ENCODE measurements at regions of chr12 and their contacts with region 1.

Region 1: GRCh38 chr12:132771126-132771838 is 9.7 kb upstream of the ANKLE2 start:
- DNase-seq: peak; percentile 92
- H3K4me3 ChIP-seq: peak overlapping the region; percentile 63
- H3K27ac ChIP-seq: peak overlapping the region; percentile 99
- H3K4me1 ChIP-seq: peaks cover 65% of the 10 kb centered on the region
- CTCF ChIP-seq: no peak

Region 2: DNA sequence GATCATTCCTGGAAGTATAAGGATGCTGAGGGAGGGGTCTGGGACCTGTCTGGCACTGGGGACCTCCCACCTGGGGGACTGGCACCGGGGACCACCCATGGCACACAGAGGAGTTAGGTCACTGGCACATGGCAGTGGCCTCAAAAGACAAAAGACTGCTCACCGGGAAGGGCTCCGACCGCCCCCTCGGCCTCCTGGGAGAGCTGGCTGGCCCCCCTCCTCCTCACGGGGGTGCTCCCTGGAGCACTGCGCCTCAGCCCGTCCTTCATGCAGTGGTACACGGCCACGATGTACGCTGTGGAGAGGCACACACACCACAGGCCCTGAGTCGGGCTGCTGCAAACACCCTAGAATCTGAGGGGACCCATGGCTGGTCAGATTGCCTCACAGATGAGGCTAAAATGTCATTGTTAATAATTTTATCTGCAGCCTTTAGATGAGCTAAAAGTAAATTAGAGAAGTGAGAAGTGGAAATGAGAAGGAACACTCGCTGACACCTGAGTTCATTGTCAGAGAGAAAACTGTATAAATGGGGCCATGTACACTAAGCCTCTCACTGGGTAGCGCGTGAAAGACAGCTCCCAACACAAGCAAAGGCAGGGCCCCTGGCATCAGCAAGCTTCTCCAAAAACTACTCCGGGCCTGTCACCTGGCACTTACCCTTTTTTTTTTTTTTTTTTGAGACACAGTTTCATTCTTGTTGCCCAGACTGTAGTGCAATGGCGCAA is 138.6 kb before region 1 on chr12:
- CTCF ChIA-PET with region 1: no interaction called
- POLR2A ChIA-PET with region 1: no interaction called
- intact Hi-C with region 1: loop called (anchors 2 kb)
- DNase-seq: peak; percentile 89
- H3K4me3 ChIP-seq: peak overlapping the region; percentile 20
- H3K27ac ChIP-seq: peak overlapping the region; percentile 100
- H3K4me1 ChIP-seq: peaks cover 62% of the 10 kb centered on the region
- CTCF ChIP-seq: no peak

Region 3: DNA sequence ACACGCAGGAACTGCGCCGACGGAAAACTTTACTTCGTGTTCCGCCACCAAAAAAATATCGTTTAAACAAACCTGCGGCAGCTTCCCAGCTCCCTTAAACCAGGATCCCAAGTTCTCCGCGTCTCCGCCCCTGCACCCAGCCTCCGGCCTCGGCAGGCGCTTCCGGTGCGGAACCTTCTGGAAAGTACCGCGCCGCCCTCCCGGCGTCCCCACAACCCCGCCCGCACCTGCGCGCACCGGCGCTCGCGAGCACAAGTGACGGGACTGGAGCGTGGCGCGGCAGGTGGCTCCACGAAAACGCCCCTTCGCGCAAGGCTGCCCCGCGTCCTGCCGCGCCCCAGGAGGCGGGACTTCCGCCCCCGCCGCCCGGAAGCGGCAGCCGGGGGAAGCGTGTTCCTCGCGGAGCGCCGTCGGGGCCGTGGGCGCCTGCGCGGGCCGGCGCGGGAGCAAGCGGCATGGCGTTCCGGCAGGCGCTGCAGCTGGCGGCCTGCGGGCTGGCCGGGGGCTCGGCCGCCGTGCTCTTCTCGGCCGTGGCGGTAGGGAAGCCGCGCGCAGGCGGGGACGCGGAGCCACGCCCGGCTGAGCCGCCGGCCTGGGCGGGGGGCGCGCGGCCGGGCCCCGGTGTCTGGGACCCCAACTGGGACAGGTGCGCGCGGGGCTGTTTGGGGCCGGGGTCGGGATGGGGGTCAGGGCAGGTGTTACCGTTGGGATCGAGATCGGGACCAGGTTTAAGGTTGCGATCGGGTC is 60.7 kb before region 1 on chr12 and contains the start of gene PGAM5:
- CTCF ChIA-PET with region 1: no interaction called
- POLR2A ChIA-PET with region 1: no interaction called
- intact Hi-C with region 1: loop called (anchors 2 kb)
- DNase-seq: peak; percentile 94
- H3K4me3 ChIP-seq: peak within 1 kb of the TSS; percentile 100
- H3K27ac ChIP-seq: peak within 1 kb of the TSS; percentile 73
- H3K4me1 ChIP-seq: peaks cover 11% of the 10 kb centered on the region
- CTCF ChIP-seq: no peak
- total RNA-seq, gene PGAM5: 94.9 and 97.2 TPM in 2 replicates

Region 4: GRCh38 chr12:132761032-132761920 is 10.0 kb before region 1 on chr12 and contains the start of gene ANKLE2:
- CTCF ChIA-PET with region 1: no interaction called
- POLR2A ChIA-PET with region 1: interaction called, 3 read pairs
- intact Hi-C with region 1: loop called (anchors 1 kb)
- DNase-seq: peak; percentile 76
- H3K4me3 ChIP-seq: peak within 1 kb of the TSS; percentile 97
- H3K27ac ChIP-seq: peak within 1 kb of the TSS; percentile 87
- H3K4me1 ChIP-seq: peaks cover 22% of the 10 kb centered on the region
- CTCF ChIP-seq: no peak
- total RNA-seq, gene ANKLE2: 88.0 and 95.4 TPM in 2 replicates

Region 5: DNA sequence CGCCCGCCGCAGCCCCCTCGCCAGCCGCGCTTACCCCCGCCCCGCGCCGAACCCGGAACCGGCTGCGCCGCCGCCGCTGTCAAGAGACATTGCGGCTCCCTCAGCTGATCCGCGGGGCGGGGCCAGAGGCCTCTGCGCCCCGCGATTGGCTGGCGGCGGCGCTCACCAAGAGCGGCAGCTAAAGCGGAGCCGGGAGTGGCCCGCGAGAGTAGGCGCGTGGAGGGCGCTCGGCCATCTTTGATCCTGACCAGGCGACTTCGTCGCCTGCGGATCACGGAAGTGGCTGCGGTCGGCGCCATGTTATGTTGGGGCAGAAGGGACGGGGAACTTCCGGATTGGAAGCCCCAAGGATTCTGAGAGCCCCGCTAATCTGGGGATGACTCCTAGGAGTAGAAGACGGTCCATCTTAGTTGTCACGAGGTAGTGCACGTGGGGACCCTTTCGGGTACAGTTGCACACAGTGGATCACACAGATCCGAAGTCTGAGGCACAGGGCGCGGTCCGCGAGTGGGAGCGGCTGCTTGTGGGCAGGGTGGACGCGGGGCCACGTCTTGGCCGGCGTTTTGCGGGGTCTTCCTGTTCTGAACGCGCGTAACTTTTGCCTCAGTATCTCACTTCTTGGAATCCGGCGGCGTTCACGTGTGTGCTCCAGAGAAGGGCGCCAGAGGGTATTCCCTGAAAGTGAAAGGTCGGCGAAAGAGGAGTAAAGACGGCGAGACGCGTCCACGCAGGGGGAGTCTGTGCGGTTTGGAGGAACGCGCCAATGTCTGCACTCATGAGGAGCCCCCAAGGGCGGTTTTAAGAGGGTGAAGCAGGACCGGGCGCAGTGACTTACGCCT is 116.5 kb after region 1 on chr12 and contains the start of gene CHFR:
- CTCF ChIA-PET with region 1: no interaction called
- POLR2A ChIA-PET with region 1: no interaction called
- intact Hi-C with region 1: loop called (anchors 5 kb)
- DNase-seq: peak; percentile 98
- H3K4me3 ChIP-seq: peak within 1 kb of the TSS; percentile 95
- H3K27ac ChIP-seq: peak within 1 kb of the TSS; percentile 43
- H3K4me1 ChIP-seq: peaks cover 14% of the 10 kb centered on the region
- CTCF ChIP-seq: no peak
- total RNA-seq, gene CHFR: 25.4 and 38.2 TPM in 2 replicates

Measured in OCI-LY7 (cell line).